Left lung (tissue), 14 donors: ENCODE measurements at regions of chr20 and their contacts with region 1.

Region 1: GRCh38 chr20:22333885-22334545 is 250.4 kb downstream of the FOXA2 start:
- DNase-seq: peak in 3 of 4 donors; percentile 35 to 71 (median 46)
- ATAC-seq: peak; percentile 95
- H3K4me3 ChIP-seq: no peak overlapping the region
- H3K27ac ChIP-seq: no peak overlapping the region
- H3K4me1 ChIP-seq: no peaks in the 10 kb centered on the region
- H3K27me3 ChIP-seq: peaks cover 0 to 30% of the 10 kb centered on the region in 2 donors
- CTCF ChIP-seq: peak; percentile 60 to 75

Region 2: GRCh38 chr20:22515264-22515663 is 181.2 kb after region 1 on chr20:
- intact Hi-C with region 1: no loop called
- DNase-seq: no peak
- ATAC-seq: no peak
- H3K4me3 ChIP-seq: no peak overlapping the region
- H3K27ac ChIP-seq: no peak overlapping the region
- H3K4me1 ChIP-seq: no peaks in the 10 kb centered on the region
- H3K27me3 ChIP-seq: no peaks in the 10 kb centered on the region
- CTCF ChIP-seq: no peak

Region 3: DNA sequence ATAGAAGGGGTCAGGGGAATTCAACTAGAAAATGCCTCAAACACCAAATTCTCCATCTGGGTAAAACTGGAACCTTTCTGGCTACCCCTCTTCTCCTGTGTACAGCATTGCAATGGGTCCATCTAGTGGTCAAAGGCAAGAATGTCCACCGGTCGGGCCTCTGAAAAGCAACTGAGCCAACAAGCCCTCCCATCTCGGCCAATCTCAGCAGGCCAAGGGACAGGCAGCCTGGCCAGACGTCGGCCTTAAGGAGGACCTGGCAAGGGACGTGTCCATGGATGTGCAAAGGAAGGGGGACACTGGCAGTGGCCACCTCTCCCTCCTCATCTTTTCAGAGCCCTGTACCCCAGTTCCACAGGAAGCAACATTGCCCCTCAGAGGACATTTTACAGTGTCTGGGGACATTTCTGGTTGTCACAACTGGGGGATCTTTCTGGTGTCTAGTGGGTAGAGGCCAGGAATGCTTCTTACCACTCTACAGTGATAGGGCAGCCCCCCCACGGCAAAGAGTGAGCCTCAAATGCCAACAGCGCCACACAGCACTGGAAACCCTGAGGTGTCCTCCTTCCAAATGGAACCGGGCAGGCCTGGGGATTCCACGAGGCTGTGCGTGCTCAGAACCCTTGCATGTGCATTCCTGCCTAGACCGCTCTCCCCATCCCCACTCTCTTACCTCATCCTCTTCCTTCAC is 350.2 kb after region 1 on chr20:
- intact Hi-C with region 1: loop called (anchors 2 to 10 kb)
- DNase-seq: peak in 2 of 4 donors; percentile 67 to 83
- ATAC-seq: peak; percentile 87
- H3K4me3 ChIP-seq: no peak overlapping the region
- H3K27ac ChIP-seq: peak overlapping the region in 1 of 2 donors; percentile 13
- H3K4me1 ChIP-seq: peaks cover 0 to 28% of the 10 kb centered on the region in 2 donors
- H3K27me3 ChIP-seq: no peaks in the 10 kb centered on the region
- CTCF ChIP-seq: peak; percentile 84 to 87